ENCODE measurements at regions of chr3 and their contacts with region 1.

Region 1: GRCh38 chr3:131303848-131304247 is 77.7 kb upstream of the NUDT16 start:
- DNase-seq: peak; percentile 29
- H3K4me3 Mint-ChIP-seq: no peak overlapping the region
- H3K27ac Mint-ChIP-seq: no peak overlapping the region
- H3K4me1 Mint-ChIP-seq: no peaks in the 10 kb centered on the region
- H3K27me3 Mint-ChIP-seq: no peaks in the 10 kb centered on the region
- CTCF ChIP-seq: no peak

Region 2: GRCh38 chr3:131242201-131242600 is 61.6 kb before region 1 on chr3:
- CTCF ChIA-PET with region 1: no interaction called
- POLR2A ChIA-PET with region 1: no interaction called
- intact Hi-C with region 1: no loop called
- DNase-seq: no peak
- H3K4me3 Mint-ChIP-seq: no peak overlapping the region
- H3K27ac Mint-ChIP-seq: no peak overlapping the region
- H3K4me1 Mint-ChIP-seq: no peaks in the 10 kb centered on the region
- H3K27me3 Mint-ChIP-seq: no peaks in the 10 kb centered on the region
- CTCF ChIP-seq: no peak

Region 3: DNA sequence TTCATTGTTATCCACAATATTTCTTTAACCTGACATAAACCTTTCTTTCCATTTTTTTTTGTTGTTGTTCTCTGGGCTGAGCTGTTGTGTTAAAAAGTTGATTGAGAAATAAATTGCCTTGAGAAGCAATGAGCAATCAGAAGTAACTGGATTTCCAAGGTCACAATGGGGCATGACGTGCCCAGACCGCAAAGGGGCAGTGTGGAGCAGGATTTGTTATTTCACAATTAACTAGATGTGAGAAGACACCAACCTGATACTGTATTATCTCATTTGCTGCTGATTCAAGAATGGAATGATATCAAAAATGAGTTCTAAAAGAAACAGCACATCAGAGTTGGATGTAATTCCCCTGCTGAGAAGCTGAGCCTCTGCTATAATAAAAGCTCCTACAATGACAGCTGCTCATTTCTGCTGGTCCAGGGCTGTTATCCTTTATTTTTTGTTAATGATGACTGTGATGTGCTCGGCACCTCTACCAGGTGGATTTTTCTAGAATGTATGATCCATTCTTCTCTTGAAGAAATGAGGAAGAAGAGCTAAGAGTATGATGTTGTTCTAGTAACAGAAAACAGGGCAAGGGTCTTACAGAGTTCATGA is 702.9 kb after region 1 on chr3:
- CTCF ChIA-PET with region 1: interaction called, 10 read pairs
- POLR2A ChIA-PET with region 1: no interaction called
- intact Hi-C with region 1: no loop called
- DNase-seq: peak; percentile 71
- H3K4me3 Mint-ChIP-seq: no peak overlapping the region
- H3K27ac Mint-ChIP-seq: no peak overlapping the region
- H3K4me1 Mint-ChIP-seq: no peaks in the 10 kb centered on the region
- H3K27me3 Mint-ChIP-seq: no peaks in the 10 kb centered on the region
- CTCF ChIP-seq: peak; percentile 39

Measured in MCF 10A (cell line).